ENCODE measurements at regions of chr9 and their contacts with region 1.

Region 1: DNA sequence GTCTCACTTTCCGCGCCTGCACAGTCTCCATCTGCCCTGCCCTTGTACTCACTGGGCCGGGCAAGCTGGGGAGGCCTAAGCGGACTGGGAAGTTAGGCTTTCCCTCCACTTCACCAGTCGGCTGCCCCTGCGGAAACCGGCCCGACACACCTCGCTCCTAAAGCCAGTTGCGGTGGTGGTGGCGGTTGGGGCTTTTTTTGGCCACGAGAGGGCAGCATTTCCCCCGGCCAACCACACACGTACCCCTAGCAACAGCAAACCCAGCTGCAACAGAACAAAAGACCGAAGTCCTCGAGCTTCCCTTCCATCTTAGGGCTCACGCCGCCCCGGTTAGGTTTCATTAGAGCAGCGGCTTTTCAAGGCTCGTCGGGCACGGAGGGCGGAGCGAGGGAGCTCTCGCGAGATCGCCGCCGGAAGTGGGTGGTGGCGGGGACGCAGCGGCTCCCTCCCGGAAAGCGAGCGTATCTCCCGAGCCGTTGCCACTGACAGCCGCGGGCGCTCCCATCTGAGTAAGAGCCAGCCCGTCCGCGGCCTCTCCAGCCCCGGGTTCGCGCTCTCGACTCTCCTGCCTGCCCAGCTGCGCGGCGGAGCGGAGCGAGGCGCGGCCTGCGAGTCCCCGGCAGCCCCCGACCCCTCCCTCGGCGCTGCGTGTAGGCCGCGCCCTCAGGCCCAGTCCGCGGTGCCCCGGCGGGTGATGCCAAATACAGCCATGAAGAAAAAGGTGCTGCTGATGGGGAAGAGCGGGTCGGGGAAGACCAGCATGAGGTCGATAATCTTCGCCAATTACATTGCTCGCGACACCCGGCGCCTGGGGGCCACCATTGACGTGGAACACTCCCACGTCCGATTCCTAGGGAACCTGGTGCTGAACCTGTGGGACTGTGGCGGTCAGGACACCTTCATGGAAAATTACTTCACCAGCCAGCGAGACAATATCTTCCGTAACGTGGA is at the start of gene RRAGA:
- DNase-seq: peak; percentile 97
- H3K4me3 ChIP-seq: peak within 1 kb of the TSS; percentile 76 to 89 (median 82)
- H3K27ac ChIP-seq: peak within 1 kb of the TSS; percentile 96 to 98 (median 96)
- H3K4me1 ChIP-seq: peaks cover 0 to 41% (median 37%) of the 10 kb centered on the region in 4 donors
- H3K27me3 ChIP-seq: no peaks in the 10 kb centered on the region
- CTCF ChIP-seq: peak; percentile 62 to 84 (median 84)
- EP300 ChIP-seq: peak in 1 of 4 donors; percentile 17
- POLR2A ChIP-seq: peak; percentile 74 to 76
- total RNA-seq, gene RRAGA: 53.4 to 65.2 (median 59.9) TPM

Region 2: GRCh38 chr9:19127881-19128500 is 78.8 kb after region 1 on chr9:
- intact Hi-C with region 1: loop called (anchors 2 kb)
- DNase-seq: peak; percentile 72
- H3K4me3 ChIP-seq: peak overlapping the region; percentile 67 to 90 (median 80)
- H3K27ac ChIP-seq: peak overlapping the region; percentile 94 to 99 (median 96)
- H3K4me1 ChIP-seq: peaks cover 0 to 26% (median 15%) of the 10 kb centered on the region in 4 donors
- H3K27me3 ChIP-seq: no peaks in the 10 kb centered on the region
- CTCF ChIP-seq: no peak
- EP300 ChIP-seq: no peak
- POLR2A ChIP-seq: no peak

Region 3: GRCh38 chr9:19174127-19174912 is 125.1 kb after region 1 on chr9:
- intact Hi-C with region 1: loop called (anchors 2 kb)
- DNase-seq: peak; percentile 89
- H3K4me3 ChIP-seq: no peak overlapping the region
- H3K27ac ChIP-seq: no peak overlapping the region
- H3K4me1 ChIP-seq: peaks cover 0 to 3% (median 0%) of the 10 kb centered on the region in 4 donors
- H3K27me3 ChIP-seq: no peaks in the 10 kb centered on the region
- CTCF ChIP-seq: peak; percentile 21 to 71 (median 40)
- EP300 ChIP-seq: no peak
- POLR2A ChIP-seq: no peak

Region 4: GRCh38 chr9:19456996-19457692 is 407.9 kb after region 1 on chr9:
- intact Hi-C with region 1: loop called (anchors 5 kb)
- DNase-seq: peak; percentile 84
- H3K4me3 ChIP-seq: peak overlapping the region in 3 of 4 donors; percentile 2 to 29 (median 15)
- H3K27ac ChIP-seq: peak overlapping the region in 3 of 4 donors; percentile 13 to 45 (median 33)
- H3K4me1 ChIP-seq: peaks cover 0 to 11% (median 4%) of the 10 kb centered on the region in 4 donors
- H3K27me3 ChIP-seq: no peaks in the 10 kb centered on the region
- CTCF ChIP-seq: peak; percentile 91 to 97 (median 92)
- EP300 ChIP-seq: no peak
- POLR2A ChIP-seq: no peak

Measured in sigmoid colon (tissue), 7 donors.